ENCODE measurements at regions of chr9 and their contacts with region 1.

Region 1: DNA sequence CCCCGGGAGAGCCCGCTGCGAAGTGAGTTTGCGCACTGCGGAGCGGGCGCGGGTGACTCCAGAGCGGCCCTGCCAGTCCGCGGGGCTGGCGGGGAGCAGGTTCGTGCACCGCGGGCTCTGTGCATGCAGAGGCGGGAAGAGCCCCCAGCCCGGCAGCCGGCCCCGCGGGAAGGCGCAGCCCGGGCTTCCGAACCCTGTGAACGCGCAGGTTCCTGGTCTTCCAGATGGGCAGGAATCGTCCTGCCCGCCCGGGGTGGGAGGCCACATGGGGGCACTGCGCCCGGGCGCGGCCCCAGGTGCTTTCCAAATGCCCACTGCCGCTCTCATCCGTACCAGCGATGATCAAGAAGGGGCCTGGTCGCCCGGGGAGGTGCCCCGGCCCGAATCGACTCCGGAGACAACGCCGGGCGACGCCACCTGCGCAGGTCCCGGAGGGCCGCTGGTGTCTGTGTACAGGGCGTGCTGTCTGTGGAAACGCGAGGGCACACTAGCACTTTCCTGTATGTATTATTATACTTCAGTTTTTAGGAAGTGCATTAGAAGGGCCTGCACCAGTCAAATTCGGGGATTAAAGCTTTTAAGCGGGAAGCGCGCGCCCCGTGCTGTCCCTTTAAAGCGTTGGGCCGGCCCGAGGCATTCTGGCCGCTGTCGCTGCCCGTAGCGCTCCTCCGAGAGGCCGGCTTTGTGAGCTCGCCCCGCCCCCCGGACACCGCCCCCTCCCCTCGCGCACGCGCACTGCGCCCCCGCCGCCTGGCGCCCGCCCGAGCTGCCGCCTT is at the start of gene WDR5:
- DNase-seq: peak; percentile 87 to 93 (median 90)
- H3K4me3 ChIP-seq: peak within 1 kb of the TSS; percentile 47 to 94
- H3K4me3 Mint-ChIP-seq: peak within 1 kb of the TSS; percentile 89 to 95 (median 90)
- H3K27ac ChIP-seq: peak within 1 kb of the TSS; percentile 84
- H3K27ac Mint-ChIP-seq: peak within 1 kb of the TSS; percentile 81 to 92 (median 89)
- H3K4me1 ChIP-seq: peaks cover 39% of the 10 kb centered on the region
- H3K4me1 Mint-ChIP-seq: peaks cover 25 to 53% (median 37%) of the 10 kb centered on the region in 4 donors
- H3K27me3 ChIP-seq: no peaks in the 10 kb centered on the region
- H3K27me3 Mint-ChIP-seq: no peaks in the 10 kb centered on the region
- total RNA-seq, gene WDR5: 30.3 to 32.7 TPM

Region 2: DNA sequence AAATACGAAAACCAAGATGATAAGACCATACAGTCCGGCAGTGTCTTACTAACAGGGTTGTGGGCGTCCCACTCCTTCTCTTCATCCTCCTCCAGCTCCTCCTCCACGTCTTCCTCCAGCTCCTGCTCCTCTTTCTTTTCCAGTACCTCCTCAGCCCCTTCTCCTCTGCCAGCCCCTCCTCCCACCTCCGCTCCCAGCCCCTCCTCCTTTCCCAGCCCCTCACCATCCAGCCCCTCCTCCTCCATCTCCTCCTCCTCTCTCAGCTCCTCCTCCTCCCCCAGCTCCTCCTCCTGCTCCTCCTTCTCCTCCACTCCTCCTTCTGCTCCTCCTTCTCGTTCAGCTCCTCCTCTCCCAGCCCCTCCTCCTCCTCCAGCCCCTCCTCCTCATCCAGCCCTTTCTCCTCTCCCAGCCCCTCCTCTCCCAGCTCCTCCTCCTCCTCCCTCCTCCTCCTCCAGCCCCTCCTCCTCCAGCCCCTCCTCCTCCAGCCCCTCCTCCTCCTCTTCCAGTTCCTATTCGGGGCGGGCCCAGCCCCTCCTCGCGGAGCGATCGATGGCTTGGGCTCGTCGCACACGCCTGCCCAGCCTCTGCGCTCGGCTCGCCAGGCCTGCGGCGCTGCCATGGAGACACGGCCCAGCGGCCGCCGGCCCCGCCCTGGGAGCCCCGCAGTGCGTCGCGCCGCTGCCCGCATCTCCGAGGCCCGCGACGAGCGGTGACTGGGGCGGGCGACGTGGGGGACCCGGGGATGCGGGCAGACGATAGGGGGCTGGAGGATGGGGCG is 110.5 kb before region 1 on chr9 and contains the start of gene BRD3OS:
- CTCF ChIA-PET with region 1: no interaction called
- POLR2A ChIA-PET with region 1: interaction called, 10 read pairs
- intact Hi-C with region 1: loop called (anchors 1 kb)
- DNase-seq: peak; percentile 89 to 96 (median 93)
- H3K4me3 ChIP-seq: peak within 1 kb of the TSS; percentile 36 to 89
- H3K4me3 Mint-ChIP-seq: peak within 1 kb of the TSS; percentile 78 to 86 (median 82)
- H3K27ac ChIP-seq: peak within 1 kb of the TSS; percentile 68
- H3K27ac Mint-ChIP-seq: peak within 1 kb of the TSS; percentile 45 to 90 (median 85)
- H3K4me1 ChIP-seq: peaks cover 14% of the 10 kb centered on the region
- H3K4me1 Mint-ChIP-seq: peaks cover 3 to 22% (median 7%) of the 10 kb centered on the region in 4 donors
- H3K27me3 ChIP-seq: no peaks in the 10 kb centered on the region
- H3K27me3 Mint-ChIP-seq: no peaks in the 10 kb centered on the region
- total RNA-seq, gene BRD3OS: 18.3 to 21.5 TPM

Region 3: DNA sequence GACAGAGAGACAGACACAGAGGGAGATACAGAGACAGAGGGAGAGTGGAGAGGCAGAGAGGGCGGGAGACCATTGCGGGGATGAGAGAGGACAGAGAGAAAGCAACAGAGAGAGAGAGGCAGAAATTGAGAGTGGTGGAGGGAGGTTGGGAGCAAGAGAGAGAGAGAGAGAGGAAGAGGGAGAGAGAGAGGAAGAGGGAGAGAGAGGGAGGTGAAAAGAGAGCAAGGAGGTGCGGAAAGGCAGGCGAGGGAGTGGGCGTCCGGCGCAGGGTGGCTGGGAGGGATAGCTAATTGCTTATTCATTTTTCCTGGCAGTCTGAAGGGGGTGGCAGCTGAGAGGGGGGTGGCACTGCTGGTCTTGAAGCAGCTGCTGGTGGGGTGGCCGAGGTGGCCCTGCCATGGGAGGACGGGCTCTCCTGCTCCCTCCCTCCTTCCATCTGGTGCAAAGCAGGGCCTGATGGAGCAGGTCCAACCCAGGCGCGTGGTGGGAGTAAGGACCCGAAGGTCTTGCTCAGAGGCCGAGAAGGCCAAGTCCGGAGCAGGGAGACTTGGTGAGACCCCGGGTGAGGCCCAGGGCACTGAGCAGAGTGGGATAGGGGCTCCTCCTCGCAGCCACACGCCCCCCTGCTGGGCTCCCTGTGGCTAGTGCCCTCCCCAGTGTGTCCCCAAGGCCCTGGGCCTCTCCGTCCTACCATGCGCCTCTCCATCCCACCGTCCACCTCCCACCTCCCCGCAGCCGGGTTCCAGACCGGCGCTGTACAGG is 54.1 kb after region 1 on chr9:
- CTCF ChIA-PET with region 1: no interaction called
- POLR2A ChIA-PET with region 1: no interaction called
- intact Hi-C with region 1: no loop called
- DNase-seq: no peak
- H3K4me3 ChIP-seq: no peak overlapping the region
- H3K4me3 Mint-ChIP-seq: peak overlapping the region in 1 of 8 donors; percentile 43
- H3K27ac ChIP-seq: no peak overlapping the region
- H3K27ac Mint-ChIP-seq: peak overlapping the region in 1 of 7 donors; percentile 52
- H3K4me1 ChIP-seq: peaks cover 13% of the 10 kb centered on the region
- H3K4me1 Mint-ChIP-seq: peaks cover 12 to 31% (median 13%) of the 10 kb centered on the region in 4 donors
- H3K27me3 ChIP-seq: no peaks in the 10 kb centered on the region
- H3K27me3 Mint-ChIP-seq: no peaks in the 10 kb centered on the region

Region 4: GRCh38 chr9:134253606-134254198 is 118.2 kb after region 1 on chr9:
- CTCF ChIA-PET with region 1: no interaction called
- POLR2A ChIA-PET with region 1: no interaction called
- intact Hi-C with region 1: no loop called
- DNase-seq: no peak
- H3K4me3 ChIP-seq: no peak overlapping the region
- H3K4me3 Mint-ChIP-seq: peak overlapping the region in 1 of 8 donors; percentile 43
- H3K27ac ChIP-seq: no peak overlapping the region
- H3K27ac Mint-ChIP-seq: peak overlapping the region in 2 of 7 donors; percentile 15 to 31
- H3K4me1 ChIP-seq: no peaks in the 10 kb centered on the region
- H3K4me1 Mint-ChIP-seq: no peaks in the 10 kb centered on the region
- H3K27me3 ChIP-seq: no peaks in the 10 kb centered on the region
- H3K27me3 Mint-ChIP-seq: no peaks in the 10 kb centered on the region

Region 5: DNA sequence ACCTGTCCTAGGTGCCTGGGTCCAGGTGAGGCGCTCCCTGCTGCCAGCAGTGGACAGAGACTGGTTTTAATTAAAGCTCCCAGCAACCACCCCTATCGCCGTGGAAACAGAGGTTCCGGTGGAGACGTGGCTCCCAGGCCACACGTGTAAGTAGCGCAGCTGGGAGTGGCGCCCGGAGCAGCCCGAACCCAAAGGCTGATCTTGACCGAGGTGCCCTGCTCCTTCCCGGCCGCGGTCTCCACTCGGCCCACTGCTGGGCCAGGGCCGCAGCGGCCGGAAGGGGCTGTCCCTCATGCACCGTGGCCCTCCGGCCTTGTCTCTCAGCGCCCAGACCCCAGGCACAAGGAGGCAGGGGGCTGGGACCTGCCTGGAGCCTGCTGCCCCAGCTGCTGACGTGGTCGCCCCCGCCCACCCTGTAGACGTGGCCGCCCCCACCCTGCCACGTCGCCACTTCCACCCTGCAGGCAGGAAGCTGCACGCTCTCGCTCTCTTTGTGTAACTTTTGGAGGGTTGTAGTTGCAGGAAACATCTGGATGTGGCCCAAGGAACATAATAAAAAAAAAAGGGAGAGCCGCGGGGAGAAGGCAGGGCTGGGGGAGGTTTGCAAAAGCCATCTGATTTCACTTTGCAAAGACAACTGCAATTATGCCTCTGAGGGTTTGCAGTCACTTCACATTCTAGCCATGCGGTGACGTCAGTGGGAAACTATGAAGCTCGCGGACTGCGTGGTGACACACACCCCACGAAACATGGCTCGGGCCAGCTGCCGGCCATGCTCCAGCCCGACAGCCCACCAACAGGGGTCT is 320.6 kb after region 1 on chr9:
- CTCF ChIA-PET with region 1: no interaction called
- POLR2A ChIA-PET with region 1: interaction called, 18 read pairs
- intact Hi-C with region 1: no loop called
- DNase-seq: peak; percentile 76 to 83 (median 81)
- H3K4me3 ChIP-seq: peak overlapping the region; percentile 62 to 76
- H3K4me3 Mint-ChIP-seq: peak overlapping the region; percentile 73 to 94 (median 84)
- H3K27ac ChIP-seq: peak overlapping the region; percentile 64
- H3K27ac Mint-ChIP-seq: peak overlapping the region; percentile 86 to 96 (median 93)
- H3K4me1 ChIP-seq: peaks cover 22% of the 10 kb centered on the region
- H3K4me1 Mint-ChIP-seq: peaks cover 4 to 18% (median 9%) of the 10 kb centered on the region in 4 donors
- H3K27me3 ChIP-seq: no peaks in the 10 kb centered on the region
- H3K27me3 Mint-ChIP-seq: no peaks in the 10 kb centered on the region